ENCODE measurements at regions of chr5 and their contacts with region 1.

Region 1: DNA sequence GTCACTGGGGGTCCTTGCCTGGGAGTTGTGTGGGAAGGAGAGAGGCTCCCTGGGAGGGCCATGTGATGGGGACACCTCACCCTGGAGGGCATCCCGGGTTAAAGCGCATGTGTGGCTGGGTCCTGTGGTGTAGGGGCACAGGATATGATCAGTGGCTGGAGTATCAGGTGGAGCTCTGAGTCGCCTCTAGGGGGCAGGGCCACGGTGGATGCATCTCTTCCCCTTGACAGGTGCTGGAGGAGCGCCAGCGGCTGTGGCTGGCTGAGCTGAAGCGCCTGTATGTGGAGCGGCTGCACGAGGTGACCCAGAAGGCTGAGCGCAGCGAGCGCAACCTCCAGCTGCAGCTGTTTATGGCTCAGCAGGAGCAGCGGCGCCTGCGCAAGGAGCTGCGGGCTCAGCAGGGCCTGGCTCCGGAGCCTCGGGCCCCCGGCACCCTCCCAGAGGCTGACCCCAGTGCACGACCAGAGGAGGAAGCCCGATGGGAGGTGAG is 7.6 kb downstream of the N4BP3 start:
- DNase-seq: peak; percentile 81 to 92 (median 87)
- H3K4me3 ChIP-seq: peak overlapping the region in 1 of 2 donors; percentile 47
- H3K4me3 Mint-ChIP-seq: peak overlapping the region in 5 of 8 donors; percentile 3 to 73 (median 32)
- H3K27ac ChIP-seq: no peak overlapping the region
- H3K27ac Mint-ChIP-seq: peak overlapping the region in 3 of 7 donors; percentile 11 to 78 (median 42)
- H3K4me1 ChIP-seq: peaks cover 42% of the 10 kb centered on the region
- H3K4me1 Mint-ChIP-seq: peaks cover 9 to 26% (median 19%) of the 10 kb centered on the region in 4 donors
- H3K27me3 ChIP-seq: no peaks in the 10 kb centered on the region
- H3K27me3 Mint-ChIP-seq: peaks cover 0 to 3% of the 10 kb centered on the region in 2 donors

Region 2: DNA sequence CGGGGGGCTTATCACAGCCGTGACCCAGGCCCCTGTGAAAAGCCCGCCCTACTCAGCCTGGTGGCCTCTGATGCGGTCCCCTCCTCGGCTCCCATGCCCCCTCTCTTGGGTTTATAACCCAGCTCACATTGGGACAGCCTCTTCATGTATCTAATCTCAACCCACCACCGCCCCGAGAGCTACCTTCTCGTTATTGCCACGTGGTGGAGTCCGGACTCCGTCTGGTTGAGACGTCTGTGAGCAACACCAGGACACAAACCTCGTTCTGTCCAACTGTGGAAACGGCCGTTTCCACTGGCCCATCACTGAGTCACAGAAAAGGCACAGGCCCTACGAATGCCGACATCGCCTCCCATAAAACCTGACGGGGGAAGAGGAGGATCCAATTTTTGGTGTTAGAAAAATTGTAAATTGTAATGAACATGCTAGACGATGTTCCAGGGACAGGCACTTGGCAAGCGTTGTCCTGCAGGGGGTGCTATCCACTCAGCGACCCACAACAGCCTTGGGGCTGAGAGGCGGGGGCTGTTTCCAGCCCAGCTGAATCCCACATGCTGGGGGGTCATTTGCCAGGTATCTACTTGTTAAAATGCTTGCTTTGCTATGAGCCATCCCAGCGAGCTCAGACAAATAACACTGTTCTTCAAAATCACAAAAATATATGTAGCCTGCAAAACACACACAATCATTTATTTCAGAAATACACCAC is 44.9 kb before region 1 on chr5:
- CTCF ChIA-PET with region 1: interaction called, 25 read pairs
- POLR2A ChIA-PET with region 1: no interaction called
- intact Hi-C with region 1: loop called (anchors 1 kb)
- DNase-seq: peak; percentile 74 to 78 (median 76)
- H3K4me3 ChIP-seq: no peak overlapping the region
- H3K4me3 Mint-ChIP-seq: no peak overlapping the region
- H3K27ac ChIP-seq: no peak overlapping the region
- H3K27ac Mint-ChIP-seq: peak overlapping the region in 1 of 7 donors; percentile 3
- H3K4me1 ChIP-seq: peaks cover 5% of the 10 kb centered on the region
- H3K4me1 Mint-ChIP-seq: peaks cover 0 to 6% (median 2%) of the 10 kb centered on the region in 4 donors
- H3K27me3 ChIP-seq: peaks cover 3% of the 10 kb centered on the region
- H3K27me3 Mint-ChIP-seq: peaks cover 0 to 3% of the 10 kb centered on the region in 2 donors

Region 3: GRCh38 chr5:178106556-178107250 is 14.2 kb before region 1 on chr5:
- CTCF ChIA-PET with region 1: interaction called, 14 read pairs
- POLR2A ChIA-PET with region 1: interaction called, 3 read pairs
- intact Hi-C with region 1: no loop called
- DNase-seq: no peak
- H3K4me3 ChIP-seq: no peak overlapping the region
- H3K4me3 Mint-ChIP-seq: no peak overlapping the region
- H3K27ac ChIP-seq: no peak overlapping the region
- H3K27ac Mint-ChIP-seq: peak overlapping the region in 1 of 7 donors; percentile 17
- H3K4me1 ChIP-seq: no peaks in the 10 kb centered on the region
- H3K4me1 Mint-ChIP-seq: peaks cover 1 to 21% (median 10%) of the 10 kb centered on the region in 4 donors
- H3K27me3 ChIP-seq: no peaks in the 10 kb centered on the region
- H3K27me3 Mint-ChIP-seq: no peaks in the 10 kb centered on the region

Region 4: GRCh38 chr5:178137991-178138390 is 17.1 kb after region 1 on chr5:
- CTCF ChIA-PET with region 1: interaction called, 25 read pairs
- POLR2A ChIA-PET with region 1: interaction called, 3 read pairs
- intact Hi-C with region 1: no loop called
- DNase-seq: no peak
- H3K4me3 ChIP-seq: no peak overlapping the region
- H3K4me3 Mint-ChIP-seq: no peak overlapping the region
- H3K27ac ChIP-seq: no peak overlapping the region
- H3K27ac Mint-ChIP-seq: peak overlapping the region in 1 of 7 donors; percentile 41
- H3K4me1 ChIP-seq: no peaks in the 10 kb centered on the region
- H3K4me1 Mint-ChIP-seq: peaks cover 14 to 20% (median 17%) of the 10 kb centered on the region in 4 donors
- H3K27me3 ChIP-seq: no peaks in the 10 kb centered on the region
- H3K27me3 Mint-ChIP-seq: no peaks in the 10 kb centered on the region

Region 5: GRCh38 chr5:178146020-178146820 is 25.3 kb after region 1 on chr5:
- CTCF ChIA-PET with region 1: interaction called, 26 read pairs
- POLR2A ChIA-PET with region 1: interaction called, 19 read pairs
- intact Hi-C with region 1: loop called (anchors 1 kb)
- DNase-seq: peak; percentile 71 to 77 (median 74)
- H3K4me3 ChIP-seq: no peak overlapping the region
- H3K4me3 Mint-ChIP-seq: no peak overlapping the region
- H3K27ac ChIP-seq: no peak overlapping the region
- H3K27ac Mint-ChIP-seq: peak overlapping the region in 3 of 7 donors; percentile 41 to 46 (median 45)
- H3K4me1 ChIP-seq: peaks cover 12% of the 10 kb centered on the region
- H3K4me1 Mint-ChIP-seq: peaks cover 8 to 22% (median 10%) of the 10 kb centered on the region in 4 donors
- H3K27me3 ChIP-seq: no peaks in the 10 kb centered on the region
- H3K27me3 Mint-ChIP-seq: no peaks in the 10 kb centered on the region

Region 6: DNA sequence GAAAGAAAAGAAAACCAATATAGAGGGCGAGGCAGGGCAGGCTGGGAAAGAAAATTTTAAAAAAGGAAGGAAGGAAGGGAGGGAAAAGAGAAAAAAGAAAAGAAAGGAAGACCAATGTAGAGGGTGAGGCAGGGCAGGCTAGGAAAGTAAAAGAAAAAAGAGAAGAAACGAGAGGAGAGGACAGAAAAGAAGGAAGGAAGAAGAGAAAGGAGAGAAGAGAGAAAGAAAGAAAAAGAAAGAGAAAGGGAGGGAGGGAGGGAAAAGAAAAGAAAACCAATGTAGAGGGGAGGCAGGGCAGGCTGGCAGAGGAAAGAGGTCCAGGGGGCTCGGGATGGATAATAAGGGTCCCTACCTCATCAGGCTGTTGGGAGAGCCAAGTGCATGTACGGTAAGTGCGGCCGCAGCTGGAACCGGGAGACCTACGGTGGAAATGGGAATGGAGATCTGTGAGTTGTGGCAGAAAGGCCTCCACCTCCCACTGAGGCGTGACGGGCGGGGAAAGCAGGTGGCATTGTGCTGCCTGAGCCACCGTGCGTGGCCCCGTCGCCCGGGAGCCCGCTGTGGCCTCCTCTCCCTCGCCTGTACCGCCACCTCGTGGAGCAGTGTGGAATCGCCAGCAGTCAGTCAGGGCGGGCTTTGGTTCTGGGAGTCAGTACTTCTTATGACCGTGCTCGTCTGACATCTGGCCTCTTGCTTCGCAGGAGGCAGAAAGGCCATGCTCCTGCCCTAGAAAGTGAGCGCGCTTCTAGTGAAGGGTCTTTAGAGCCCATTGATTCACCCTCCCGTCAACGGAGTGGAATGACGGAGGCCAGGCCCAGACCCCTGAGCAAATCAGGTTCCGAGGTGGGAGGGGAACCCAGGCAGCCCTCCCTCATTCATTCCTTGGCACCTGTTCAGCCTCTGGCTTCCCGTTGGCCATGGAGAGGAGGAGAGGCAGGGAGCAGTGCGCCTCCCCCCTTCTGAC is 43.1 kb after region 1 on chr5:
- CTCF ChIA-PET with region 1: interaction called, 6 read pairs
- POLR2A ChIA-PET with region 1: no interaction called
- intact Hi-C with region 1: loop called (anchors 1 kb)
- DNase-seq: peak; percentile 86 to 91 (median 88)
- H3K4me3 ChIP-seq: no peak overlapping the region
- H3K4me3 Mint-ChIP-seq: peak overlapping the region in 2 of 8 donors; percentile 22 to 65
- H3K27ac ChIP-seq: no peak overlapping the region
- H3K27ac Mint-ChIP-seq: peak overlapping the region in 3 of 7 donors; percentile 13 to 59 (median 53)
- H3K4me1 ChIP-seq: peaks cover 3% of the 10 kb centered on the region
- H3K4me1 Mint-ChIP-seq: peaks cover 1 to 10% (median 6%) of the 10 kb centered on the region in 4 donors
- H3K27me3 ChIP-seq: no peaks in the 10 kb centered on the region
- H3K27me3 Mint-ChIP-seq: peaks cover 8 to 20% of the 10 kb centered on the region in 2 donors

Region 7: GRCh38 chr5:179154991-179155955 is 1034.4 kb after region 1 on chr5:
- CTCF ChIA-PET with region 1: no interaction called
- POLR2A ChIA-PET with region 1: no interaction called
- intact Hi-C with region 1: no loop called
- DNase-seq: no peak
- H3K4me3 ChIP-seq: no peak overlapping the region
- H3K4me3 Mint-ChIP-seq: no peak overlapping the region
- H3K27ac ChIP-seq: no peak overlapping the region
- H3K27ac Mint-ChIP-seq: no peak overlapping the region
- H3K4me1 ChIP-seq: no peaks in the 10 kb centered on the region
- H3K4me1 Mint-ChIP-seq: no peaks in the 10 kb centered on the region
- H3K27me3 ChIP-seq: no peaks in the 10 kb centered on the region
- H3K27me3 Mint-ChIP-seq: peaks cover 0 to 2% of the 10 kb centered on the region in 2 donors